ENCODE measurements at regions of chr2 and their contacts with region 1.

Region 1: DNA sequence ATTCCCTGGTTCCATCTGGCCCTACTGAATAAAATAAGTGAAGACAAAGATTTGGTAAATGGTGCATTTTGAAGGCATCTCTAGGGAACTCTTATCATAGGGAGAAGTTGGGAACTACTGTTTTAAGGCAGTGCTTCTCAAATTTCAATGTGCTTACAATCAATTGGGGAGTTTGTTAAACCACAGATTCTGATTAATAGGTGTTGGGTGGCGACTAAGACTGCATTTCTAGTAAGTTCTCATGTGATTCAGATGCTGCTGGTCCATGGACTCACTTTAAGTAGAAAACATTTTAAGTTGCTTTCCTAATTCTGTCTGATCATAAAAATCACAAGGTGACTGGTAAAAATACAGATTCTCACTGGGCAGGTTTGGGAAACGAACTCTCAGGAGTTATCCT is 14.6 kb downstream of the FARSB start:
- DNase-seq: peak; percentile 43
- ATAC-seq: no peak
- H3K4me3 ChIP-seq: no peak overlapping the region
- H3K27ac ChIP-seq: no peak overlapping the region
- H3K4me1 ChIP-seq: 0 out of 2 replicates have a peak, but pooled peaks cover 2% of the 10 kb centered on the region
- H3K27me3 ChIP-seq: no peaks in the 10 kb centered on the region
- CTCF ChIP-seq: no peak
- POLR2A ChIP-seq: no peak
- RAD21 ChIP-seq: no peak

Region 2: DNA sequence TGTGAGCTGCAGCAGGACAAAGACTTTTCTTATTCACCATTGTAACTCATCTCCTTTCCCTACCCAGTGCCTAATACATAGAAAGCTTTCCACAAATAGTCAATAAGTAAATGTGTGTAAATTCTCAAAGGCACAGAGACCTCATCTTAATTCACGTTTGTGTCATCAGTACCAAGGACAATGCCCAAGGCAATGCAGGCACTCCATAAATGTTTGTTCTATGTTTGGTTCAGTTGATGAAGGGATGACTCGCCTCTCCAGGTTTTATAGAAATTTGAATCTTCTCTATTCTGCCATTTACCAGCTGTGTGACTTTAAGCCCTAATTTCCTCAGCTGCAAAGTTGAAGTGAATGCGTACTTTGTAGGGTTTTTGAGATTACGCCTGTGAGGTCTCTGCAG is 28.0 kb after region 1 on chr2:
- CTCF ChIA-PET with region 1: no interaction called
- POLR2A ChIA-PET with region 1: interaction called, 15 read pairs
- dilution Hi-C with region 1: no loop called
- in situ Hi-C with region 1: no loop called
- intact Hi-C with region 1: no loop called
- DNase-seq: no peak
- ATAC-seq: no peak
- H3K4me3 ChIP-seq: no peak overlapping the region
- H3K27ac ChIP-seq: no peak overlapping the region
- H3K4me1 ChIP-seq: no peaks in the 10 kb centered on the region
- H3K27me3 ChIP-seq: peaks cover 34% of the 10 kb centered on the region
- CTCF ChIP-seq: no peak
- POLR2A ChIP-seq: no peak
- RAD21 ChIP-seq: no peak